ENCODE measurements at regions of chr12 and their contacts with region 1.

Region 1: GRCh38 chr12:103548622-103549601 is 38.2 kb upstream of the STAB2 start:
- DNase-seq: no peak
- ATAC-seq: peak; percentile 85
- H3K4me3 ChIP-seq: no peak overlapping the region
- H3K27ac ChIP-seq: no peak overlapping the region
- H3K4me1 ChIP-seq: no peaks in the 10 kb centered on the region
- H3K27me3 ChIP-seq: peaks cover 4% of the 10 kb centered on the region
- CTCF ChIP-seq: peak; percentile 83

Region 2: DNA sequence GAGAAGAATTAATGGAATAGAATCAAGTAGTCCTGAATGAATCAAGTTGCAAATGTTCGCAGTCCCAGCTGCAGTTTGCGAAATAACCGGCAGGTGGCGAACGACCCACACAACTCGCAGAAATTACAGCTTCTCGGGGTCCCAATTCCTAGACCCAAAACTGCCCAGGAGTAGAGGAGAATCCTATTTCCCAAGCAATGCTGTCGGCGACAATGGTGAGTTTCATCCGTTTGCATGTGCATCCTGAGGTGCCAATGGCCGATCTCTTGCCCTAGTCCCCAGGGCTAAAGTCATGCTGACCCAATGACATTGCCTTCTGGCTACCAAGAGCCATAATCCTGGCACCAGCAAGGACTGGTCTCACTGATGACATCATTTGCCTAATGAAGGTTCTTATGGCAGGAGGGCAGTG is 600.0 kb before region 1 on chr12:
- intact Hi-C with region 1: loop called (anchors 5 kb)
- DNase-seq: no peak
- ATAC-seq: no peak
- H3K4me3 ChIP-seq: no peak overlapping the region
- H3K27ac ChIP-seq: no peak overlapping the region
- H3K4me1 ChIP-seq: no peaks in the 10 kb centered on the region
- H3K27me3 ChIP-seq: peaks cover 43% of the 10 kb centered on the region
- CTCF ChIP-seq: peak; percentile 91

Measured in upper lobe of right lung (tissue), 1 donor.